ENCODE measurements at regions of chr2 and their contacts with region 1.

Region 1: GRCh38 chr2:169109502-169110409 is 40.4 kb downstream of the DHRS9 start:
- DNase-seq: peak; percentile 81
- H3K4me3 ChIP-seq: no peak overlapping the region
- H3K27ac ChIP-seq: no peak overlapping the region
- H3K4me1 ChIP-seq: no peaks in the 10 kb centered on the region
- H3K27me3 ChIP-seq: no peaks in the 10 kb centered on the region
- CTCF ChIP-seq: peak; percentile 86

Region 2: GRCh38 chr2:168961450-168962229 is 148.1 kb before region 1 on chr2:
- intact Hi-C with region 1: loop called (anchors 10 kb)
- DNase-seq: peak; percentile 66
- H3K4me3 ChIP-seq: no peak overlapping the region
- H3K27ac ChIP-seq: no peak overlapping the region
- H3K4me1 ChIP-seq: no peaks in the 10 kb centered on the region
- H3K27me3 ChIP-seq: no peaks in the 10 kb centered on the region
- CTCF ChIP-seq: peak; percentile 79

Region 3: GRCh38 chr2:169050478-169051240 is 59.1 kb before region 1 on chr2:
- intact Hi-C with region 1: no loop called
- DNase-seq: no peak
- H3K4me3 ChIP-seq: no peak overlapping the region
- H3K27ac ChIP-seq: no peak overlapping the region
- H3K4me1 ChIP-seq: no peaks in the 10 kb centered on the region
- H3K27me3 ChIP-seq: no peaks in the 10 kb centered on the region
- CTCF ChIP-seq: no peak

Region 4: GRCh38 chr2:169141713-169142352 is 32.1 kb after region 1 on chr2:
- intact Hi-C with region 1: loop called (anchors 5 kb)
- DNase-seq: peak; percentile 75
- H3K4me3 ChIP-seq: no peak overlapping the region
- H3K27ac ChIP-seq: no peak overlapping the region
- H3K4me1 ChIP-seq: no peaks in the 10 kb centered on the region
- H3K27me3 ChIP-seq: no peaks in the 10 kb centered on the region
- CTCF ChIP-seq: peak; percentile 77

Region 5: DNA sequence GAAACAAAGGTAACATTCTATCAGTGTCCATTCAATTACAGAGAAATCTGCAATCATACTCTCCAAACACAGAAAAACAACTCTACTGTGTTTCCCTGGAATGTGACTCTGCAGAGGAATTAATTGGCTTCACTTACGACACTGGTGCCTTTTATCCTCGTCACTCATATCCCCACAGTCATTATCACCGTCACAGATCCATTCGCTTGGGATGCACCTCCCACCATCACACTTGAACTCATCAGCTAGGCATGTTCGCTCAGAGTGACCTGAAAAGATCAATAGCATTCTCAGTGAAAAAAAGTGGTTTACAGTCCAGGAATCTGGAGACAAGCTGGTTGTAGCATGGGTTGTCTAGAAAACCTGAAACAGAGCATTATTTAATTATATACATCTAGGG is 83.9 kb after region 1 on chr2:
- intact Hi-C with region 1: no loop called
- DNase-seq: no peak
- H3K4me3 ChIP-seq: no peak overlapping the region
- H3K27ac ChIP-seq: no peak overlapping the region
- H3K4me1 ChIP-seq: no peaks in the 10 kb centered on the region
- H3K27me3 ChIP-seq: no peaks in the 10 kb centered on the region
- CTCF ChIP-seq: no peak

Region 6: GRCh38 chr2:169694113-169694903 is 584.6 kb after region 1 on chr2 and contains the starts of genes CFAP210 and PHOSPHO2:
- intact Hi-C with region 1: no loop called
- DNase-seq: peak; percentile 100
- H3K4me3 ChIP-seq: peak within 1 kb of the TSS; percentile 68
- H3K27ac ChIP-seq: peak within 1 kb of the TSS; percentile 84
- H3K4me1 ChIP-seq: peaks cover 4% of the 10 kb centered on the region
- H3K27me3 ChIP-seq: no peaks in the 10 kb centered on the region
- CTCF ChIP-seq: no peak
- total RNA-seq, gene CFAP210: not detected
- total RNA-seq, gene PHOSPHO2: 5.3 to 7.0 TPM

Measured in colonic mucosa (tissue), 4 donors.